Aorta (tissue), 5 donors: ENCODE measurements at regions of chr12 and their contacts with region 1.

Region 1: GRCh38 chr12:81759215-81760051 is at the start of gene PPFIA2:
- DNase-seq: peak; percentile 62 to 78
- ATAC-seq: peak; percentile 70
- H3K4me3 ChIP-seq: peak within 1 kb of the TSS; percentile 53 to 85
- H3K27ac ChIP-seq: peak within 1 kb of the TSS in 1 of 2 donors; percentile 15
- H3K4me1 ChIP-seq: no peaks in the 10 kb centered on the region
- H3K27me3 ChIP-seq: no peaks in the 10 kb centered on the region
- total RNA-seq, gene PPFIA2: 20.4 to 46.6 TPM

Region 2: DNA sequence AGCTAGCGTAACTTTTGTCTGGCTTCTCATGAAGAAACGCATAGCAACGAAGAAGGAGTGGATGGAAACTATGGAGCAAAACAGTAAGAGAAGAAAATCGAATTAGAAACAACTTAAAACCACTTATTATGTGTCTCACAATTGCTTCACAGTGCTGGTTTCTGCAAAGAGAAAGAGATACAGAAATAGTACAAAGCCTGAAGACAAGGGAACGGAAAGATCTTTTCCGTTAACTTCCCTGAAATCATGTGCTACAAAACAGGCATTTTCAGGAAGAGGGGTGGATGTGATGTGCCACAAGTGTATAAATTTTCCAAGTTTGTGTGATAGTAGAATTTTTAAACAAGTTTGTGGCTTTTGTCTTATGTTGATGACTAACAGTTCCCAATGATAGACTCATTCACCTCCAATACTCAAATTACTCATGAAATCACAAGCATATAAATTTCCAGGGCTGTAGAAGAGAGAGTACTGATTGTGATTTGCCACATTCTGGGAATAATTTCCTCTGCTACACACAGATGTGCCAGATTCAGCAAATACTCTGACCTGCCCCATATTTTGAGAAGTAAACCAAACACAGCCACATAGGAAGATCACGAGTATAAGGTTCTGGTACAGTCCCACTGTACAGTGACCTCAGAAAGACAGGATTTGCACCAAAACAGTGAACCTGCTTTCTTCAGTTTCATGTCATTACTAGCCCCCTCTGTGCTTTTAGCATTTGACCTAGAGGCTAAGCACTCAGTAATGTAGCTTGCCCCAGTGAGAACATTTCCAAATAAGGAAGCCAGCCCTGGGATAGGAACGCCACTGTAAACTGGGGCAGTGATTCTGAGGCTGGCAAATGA is 41.1 kb after region 1 on chr12:
- intact Hi-C with region 1: loop called in 1 of 2 experiments (anchors 5 kb)
- DNase-seq: no peak
- ATAC-seq: peak; percentile 87
- H3K4me3 ChIP-seq: peak overlapping the region in 1 of 2 donors; percentile 79
- H3K27ac ChIP-seq: peak overlapping the region; percentile 96 to 99
- H3K4me1 ChIP-seq: no peaks in the 10 kb centered on the region
- H3K27me3 ChIP-seq: no peaks in the 10 kb centered on the region